Activated T-helper 1 cell treated with anti-CD3 and anti-CD28 coated beads, Interleukin-12 subunit alpha, Interleukin-12 subunit beta, Interleukin-2, Interleukin-4 antibody, amounts not matched to agents 30 ng/mL and 10 ng/mL and 1 ng/mL, durations not matched to agents 14 hours and 24 hours and 36 hours (primary cell): ENCODE measurements at regions of chr2 and their contacts with region 1.

Region 1: GRCh38 chr2:218292048-218293014 is at the start of gene TMBIM1:
- DNase-seq: peak; percentile 79
- H3K4me3 Mint-ChIP-seq: peak within 1 kb of the TSS; percentile 88
- H3K27ac Mint-ChIP-seq: peak within 1 kb of the TSS; percentile 94
- H3K4me1 Mint-ChIP-seq: peaks cover 57% of the 10 kb centered on the region
- H3K27me3 Mint-ChIP-seq: no peaks in the 10 kb centered on the region
- total RNA-seq, gene TMBIM1: 66.2 and 70.5 TPM in 2 replicates

Region 2: DNA sequence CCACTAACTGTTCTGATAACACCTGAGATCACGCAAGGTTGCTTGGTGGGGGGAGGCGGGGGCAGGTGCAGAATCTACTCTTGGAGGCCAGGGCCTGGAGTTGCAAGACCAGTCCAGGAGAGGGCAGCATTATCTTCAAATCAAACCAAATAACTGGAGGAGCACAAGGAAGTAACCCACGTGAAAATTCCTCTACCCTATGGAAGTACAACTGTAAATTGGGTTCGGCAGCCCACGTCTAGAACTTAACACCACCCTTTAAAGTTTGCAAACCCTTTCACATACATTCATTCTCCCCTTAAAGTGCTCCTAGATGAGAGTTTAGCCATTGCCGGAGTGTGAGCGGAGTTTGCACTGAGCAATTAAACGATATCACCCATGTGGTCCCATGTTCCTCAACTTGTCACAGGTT is 106.0 kb before region 1 on chr2:
- intact Hi-C with region 1: no loop called
- DNase-seq: peak; percentile 47
- H3K4me3 Mint-ChIP-seq: no peak overlapping the region
- H3K27ac Mint-ChIP-seq: no peak overlapping the region
- H3K4me1 Mint-ChIP-seq: peaks cover 10% of the 10 kb centered on the region
- H3K27me3 Mint-ChIP-seq: peaks cover 5% of the 10 kb centered on the region

Region 3: GRCh38 chr2:218322895-218323808 is 30.8 kb after region 1 on chr2:
- intact Hi-C with region 1: loop called (anchors 2 kb)
- DNase-seq: peak; percentile 28
- H3K4me3 Mint-ChIP-seq: peak overlapping the region; percentile 84
- H3K27ac Mint-ChIP-seq: no peak overlapping the region
- H3K4me1 Mint-ChIP-seq: peaks cover 22% of the 10 kb centered on the region
- H3K27me3 Mint-ChIP-seq: peaks cover 20% of the 10 kb centered on the region

Region 4: GRCh38 chr2:218360447-218360846 is 68.1 kb after region 1 on chr2:
- intact Hi-C with region 1: loop called (anchors 2 kb)
- DNase-seq: no peak
- H3K4me3 Mint-ChIP-seq: no peak overlapping the region
- H3K27ac Mint-ChIP-seq: no peak overlapping the region
- H3K4me1 Mint-ChIP-seq: no peaks in the 10 kb centered on the region
- H3K27me3 Mint-ChIP-seq: peaks cover 9% of the 10 kb centered on the region

Region 5: GRCh38 chr2:218466016-218466521 is 173.7 kb after region 1 on chr2:
- intact Hi-C with region 1: loop called (anchors 2 kb)
- DNase-seq: no peak
- H3K4me3 Mint-ChIP-seq: no peak overlapping the region
- H3K27ac Mint-ChIP-seq: no peak overlapping the region
- H3K4me1 Mint-ChIP-seq: peaks cover 4% of the 10 kb centered on the region
- H3K27me3 Mint-ChIP-seq: no peaks in the 10 kb centered on the region